ENCODE measurements at regions of chr6 and their contacts with region 1.

Region 1: DNA sequence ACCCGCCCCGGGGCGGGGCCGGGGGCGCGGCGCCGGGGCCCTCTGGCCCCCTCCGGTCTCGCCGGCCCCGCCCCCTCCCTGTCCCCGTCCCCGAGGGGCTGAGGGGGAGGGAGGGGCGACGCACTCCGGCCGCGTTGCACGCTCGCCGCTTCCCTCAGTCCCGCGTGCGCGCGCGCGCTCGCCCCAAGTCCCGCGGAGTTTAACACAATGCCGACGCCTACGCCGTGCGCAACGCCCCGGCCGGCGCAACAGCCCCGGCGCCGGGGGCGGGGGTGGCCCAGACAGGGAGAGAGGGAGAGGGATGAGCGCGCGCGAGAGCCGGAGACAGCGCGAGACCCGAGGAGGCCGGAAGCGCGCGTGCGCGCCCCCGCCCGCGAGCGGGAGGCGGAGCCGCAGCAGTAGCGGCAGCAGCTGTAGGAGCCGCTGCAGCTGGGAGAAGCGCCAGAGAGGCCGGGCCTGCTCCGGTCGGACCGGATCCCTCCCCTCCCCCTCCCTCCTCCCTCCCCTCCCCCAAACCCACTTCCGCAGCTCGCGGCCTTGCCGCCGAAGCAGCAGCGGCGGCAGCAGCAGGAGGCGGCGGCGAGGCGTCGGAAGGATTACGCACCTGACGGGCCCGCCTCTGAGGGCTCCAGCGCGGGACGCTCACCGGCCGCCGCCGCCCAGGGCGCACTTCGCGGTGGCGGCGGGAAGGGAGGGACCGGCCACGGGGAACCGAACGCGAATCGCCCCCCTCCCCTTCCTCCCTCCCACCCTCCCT is 905 bp downstream of the ZBTB2 start:
- DNase-seq: peak; percentile 92 to 100 (median 96)
- ATAC-seq: peak; percentile 73
- H3K4me3 ChIP-seq: peak overlapping the region; percentile 66
- H3K4me3 Mint-ChIP-seq: peak overlapping the region; percentile 95
- H3K27ac ChIP-seq: peak overlapping the region; percentile 69 to 99
- H3K27ac Mint-ChIP-seq: peak overlapping the region; percentile 97
- H3K4me1 ChIP-seq: peaks cover 54% of the 10 kb centered on the region
- H3K4me1 Mint-ChIP-seq: peaks cover 76% of the 10 kb centered on the region
- H3K27me3 ChIP-seq: no peaks in the 10 kb centered on the region
- H3K27me3 Mint-ChIP-seq: peaks cover 4% of the 10 kb centered on the region
- CTCF ChIP-seq: no peak

Region 2: GRCh38 chr6:151335930-151336329 is 54.5 kb before region 1 on chr6:
- CTCF ChIA-PET with region 1: interaction called, 3 read pairs
- POLR2A ChIA-PET with region 1: interaction called, 12 read pairs
- intact Hi-C with region 1: no loop called
- DNase-seq: no peak
- ATAC-seq: no peak
- H3K4me3 ChIP-seq: no peak overlapping the region
- H3K4me3 Mint-ChIP-seq: no peak overlapping the region
- H3K27ac ChIP-seq: no peak overlapping the region
- H3K27ac Mint-ChIP-seq: no peak overlapping the region
- H3K4me1 ChIP-seq: peaks cover 2% of the 10 kb centered on the region
- H3K4me1 Mint-ChIP-seq: peaks cover 5% of the 10 kb centered on the region
- H3K27me3 ChIP-seq: no peaks in the 10 kb centered on the region
- H3K27me3 Mint-ChIP-seq: no peaks in the 10 kb centered on the region
- CTCF ChIP-seq: no peak

Region 3: DNA sequence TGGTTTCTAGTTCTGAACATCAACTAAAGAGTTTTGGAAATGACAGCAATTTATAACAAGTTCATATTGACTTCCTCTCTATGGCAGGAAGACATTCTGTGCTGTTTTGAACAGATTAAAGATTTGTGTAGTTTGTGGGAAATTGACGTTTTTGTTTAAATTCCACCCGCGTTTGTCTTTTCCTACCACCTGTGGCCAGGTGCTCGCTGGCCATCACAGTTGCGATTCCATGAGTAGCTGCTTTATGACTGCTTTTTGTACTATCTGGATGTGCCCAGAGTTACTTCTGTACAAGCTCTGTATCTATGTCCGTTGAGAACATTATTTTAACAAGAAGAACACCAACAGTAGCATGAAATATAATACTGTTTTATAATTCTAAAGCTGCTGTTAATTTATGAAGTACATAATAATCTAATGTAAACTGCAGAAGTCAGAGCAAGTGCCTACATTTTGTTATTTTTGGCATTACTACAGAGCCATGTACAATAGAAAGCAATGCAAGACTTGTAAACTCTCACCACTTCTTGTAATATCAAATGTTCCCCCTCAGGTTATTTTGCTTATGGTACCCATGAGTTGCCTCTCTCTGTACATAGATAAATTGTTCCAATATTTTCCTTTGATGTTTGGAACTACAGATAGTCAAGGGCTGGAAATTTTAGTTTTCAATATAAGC is 32.6 kb before region 1 on chr6:
- CTCF ChIA-PET with region 1: interaction called, 3 read pairs
- POLR2A ChIA-PET with region 1: interaction called, 15 read pairs
- intact Hi-C with region 1: no loop called
- DNase-seq: no peak
- ATAC-seq: no peak
- H3K4me3 ChIP-seq: no peak overlapping the region
- H3K4me3 Mint-ChIP-seq: no peak overlapping the region
- H3K27ac ChIP-seq: no peak overlapping the region
- H3K27ac Mint-ChIP-seq: no peak overlapping the region
- H3K4me1 ChIP-seq: peaks cover 5% of the 10 kb centered on the region
- H3K4me1 Mint-ChIP-seq: peaks cover 14% of the 10 kb centered on the region
- H3K27me3 ChIP-seq: no peaks in the 10 kb centered on the region
- H3K27me3 Mint-ChIP-seq: no peaks in the 10 kb centered on the region
- CTCF ChIP-seq: no peak

Region 4: GRCh38 chr6:151379933-151380847 is 10.3 kb before region 1 on chr6:
- CTCF ChIA-PET with region 1: interaction called, 3 read pairs
- POLR2A ChIA-PET with region 1: interaction called, 102 read pairs
- intact Hi-C with region 1: no loop called
- DNase-seq: peak in 4 of 14 experiments; percentile 32 to 80 (median 61)
- ATAC-seq: peak; percentile 83
- H3K4me3 ChIP-seq: peak overlapping the region; percentile 49
- H3K4me3 Mint-ChIP-seq: peak overlapping the region; percentile 89
- H3K27ac ChIP-seq: peak overlapping the region; percentile 74 to 85
- H3K27ac Mint-ChIP-seq: peak overlapping the region; percentile 93
- H3K4me1 ChIP-seq: peaks cover 46% of the 10 kb centered on the region
- H3K4me1 Mint-ChIP-seq: peaks cover 71% of the 10 kb centered on the region
- H3K27me3 ChIP-seq: no peaks in the 10 kb centered on the region
- H3K27me3 Mint-ChIP-seq: no peaks in the 10 kb centered on the region
- CTCF ChIP-seq: no peak

Region 5: DNA sequence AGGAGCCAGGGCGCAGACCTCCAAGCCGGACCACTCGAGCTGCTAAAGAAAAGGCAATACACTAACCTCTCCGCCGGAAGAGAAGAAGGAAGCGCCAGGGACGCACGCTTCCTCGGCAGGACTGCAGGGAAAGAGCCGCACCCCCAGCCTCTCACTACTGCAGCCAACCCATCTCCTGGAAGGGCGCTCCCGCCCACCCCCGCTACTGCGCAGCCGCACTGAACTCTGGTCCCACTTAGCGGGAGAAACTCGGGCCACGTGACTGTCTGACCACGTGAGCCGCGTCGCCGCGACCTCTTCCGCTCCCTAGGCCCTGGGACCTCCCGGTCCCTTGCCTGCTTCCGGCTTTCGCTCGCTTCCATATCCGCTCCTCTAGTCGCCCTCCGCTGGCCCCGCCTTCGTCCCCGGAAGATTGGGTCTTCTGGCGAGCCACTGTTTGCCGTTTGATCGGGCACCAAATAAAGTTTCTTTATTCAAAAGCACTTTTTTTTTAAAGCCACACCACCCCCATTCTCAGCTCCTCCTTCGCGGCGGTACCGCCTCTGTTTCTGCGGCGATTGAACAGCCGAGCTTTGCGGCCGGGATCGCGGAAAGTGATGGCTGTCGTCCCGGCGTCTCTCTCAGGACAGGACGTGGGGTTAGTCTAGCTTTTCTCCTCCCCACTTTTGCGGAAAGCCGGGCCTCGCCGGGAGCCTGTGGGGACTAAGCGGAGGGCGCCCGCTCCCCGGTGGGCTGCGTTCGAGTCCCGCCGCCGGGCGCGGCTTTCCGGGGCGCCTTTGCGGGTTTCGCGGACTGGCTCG is 61.7 kb after region 1 on chr6 and contains the start of gene RMND1:
- CTCF ChIA-PET with region 1: interaction called, 6 read pairs
- POLR2A ChIA-PET with region 1: interaction called, 108 read pairs
- intact Hi-C with region 1: loop called (anchors 1 kb)
- DNase-seq: peak; percentile 96 to 100 (median 99)
- ATAC-seq: peak; percentile 95
- H3K4me3 ChIP-seq: peak within 1 kb of the TSS; percentile 76
- H3K4me3 Mint-ChIP-seq: peak within 1 kb of the TSS; percentile 91
- H3K27ac ChIP-seq: peak within 1 kb of the TSS; percentile 52 to 85
- H3K27ac Mint-ChIP-seq: peak within 1 kb of the TSS; percentile 80
- H3K4me1 ChIP-seq: peaks cover 13% of the 10 kb centered on the region
- H3K4me1 Mint-ChIP-seq: peaks cover 65% of the 10 kb centered on the region
- H3K27me3 ChIP-seq: no peaks in the 10 kb centered on the region
- H3K27me3 Mint-ChIP-seq: no peaks in the 10 kb centered on the region
- CTCF ChIP-seq: no peak
- total RNA-seq, gene RMND1: 6.5 to 7.5 TPM

Region 6: GRCh38 chr6:152184917-152185574 is 794.6 kb after region 1 on chr6:
- CTCF ChIA-PET with region 1: no interaction called
- POLR2A ChIA-PET with region 1: interaction called, 24 read pairs
- intact Hi-C with region 1: no loop called
- DNase-seq: peak in 7 of 14 experiments; percentile 4 to 78 (median 42)
- ATAC-seq: peak; percentile 75
- H3K4me3 ChIP-seq: peak overlapping the region; percentile 56
- H3K4me3 Mint-ChIP-seq: peak overlapping the region; percentile 96
- H3K27ac ChIP-seq: peak overlapping the region; percentile 81 to 90
- H3K27ac Mint-ChIP-seq: peak overlapping the region; percentile 97
- H3K4me1 ChIP-seq: peaks cover 26% of the 10 kb centered on the region
- H3K4me1 Mint-ChIP-seq: peaks cover 88% of the 10 kb centered on the region
- H3K27me3 ChIP-seq: no peaks in the 10 kb centered on the region
- H3K27me3 Mint-ChIP-seq: no peaks in the 10 kb centered on the region
- CTCF ChIP-seq: no peak